Activated CD8-positive, alpha-beta T cell treated with anti-CD3 and anti-CD28 coated beads, Interleukin-2, amount 10 ng/mL, durations not matched to agents 7 days and 5 days (primary cell): ENCODE measurements at regions of chr7 and their contacts with region 1.

Region 1: DNA sequence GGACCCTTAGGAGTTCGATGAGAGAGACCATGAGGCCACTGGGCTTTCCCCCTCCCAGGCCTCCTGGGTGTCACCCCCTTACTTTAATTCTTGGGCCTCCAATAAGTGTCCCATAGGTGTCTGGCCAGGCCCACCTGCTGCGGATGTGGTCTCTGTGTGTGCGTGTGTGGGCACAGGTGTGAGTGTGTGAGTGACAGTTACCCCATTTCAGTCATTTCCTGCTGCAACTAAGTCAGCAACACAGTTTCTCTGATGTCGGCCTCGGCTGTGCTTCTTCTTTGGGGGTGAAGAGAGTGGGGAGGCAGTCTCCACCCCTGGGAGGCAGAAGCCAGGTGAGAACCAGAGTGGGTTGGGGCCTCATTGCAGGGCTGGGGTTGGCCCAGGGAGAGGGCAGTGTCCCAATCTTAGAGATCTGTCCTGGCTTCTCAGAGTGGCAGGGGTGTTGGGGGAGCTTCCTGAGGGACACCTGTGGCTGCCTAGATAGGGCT is 1.5 kb downstream of the PVRIG start:
- DNase-seq: peak; percentile 83
- ATAC-seq: peak; percentile 50
- H3K4me3 Mint-ChIP-seq: peak overlapping the region; percentile 95
- H3K27ac Mint-ChIP-seq: peak overlapping the region; percentile 98
- H3K4me1 Mint-ChIP-seq: peaks cover 65% of the 10 kb centered on the region
- H3K27me3 Mint-ChIP-seq: no peaks in the 10 kb centered on the region

Region 2: GRCh38 chr7:100148559-100149350 is 72.5 kb before region 1 on chr7 and contains the start of gene LAMTOR4:
- CTCF ChIA-PET with region 1: interaction called, 22 read pairs
- POLR2A ChIA-PET with region 1: interaction called, 15 read pairs
- DNase-seq: peak; percentile 100
- ATAC-seq: peak; percentile 99
- H3K4me3 Mint-ChIP-seq: peak within 1 kb of the TSS; percentile 96
- H3K27ac Mint-ChIP-seq: peak within 1 kb of the TSS; percentile 97
- H3K4me1 Mint-ChIP-seq: peaks cover 42% of the 10 kb centered on the region
- H3K27me3 Mint-ChIP-seq: no peaks in the 10 kb centered on the region
- total RNA-seq, gene LAMTOR4: 134 to 143 TPM

Region 3: DNA sequence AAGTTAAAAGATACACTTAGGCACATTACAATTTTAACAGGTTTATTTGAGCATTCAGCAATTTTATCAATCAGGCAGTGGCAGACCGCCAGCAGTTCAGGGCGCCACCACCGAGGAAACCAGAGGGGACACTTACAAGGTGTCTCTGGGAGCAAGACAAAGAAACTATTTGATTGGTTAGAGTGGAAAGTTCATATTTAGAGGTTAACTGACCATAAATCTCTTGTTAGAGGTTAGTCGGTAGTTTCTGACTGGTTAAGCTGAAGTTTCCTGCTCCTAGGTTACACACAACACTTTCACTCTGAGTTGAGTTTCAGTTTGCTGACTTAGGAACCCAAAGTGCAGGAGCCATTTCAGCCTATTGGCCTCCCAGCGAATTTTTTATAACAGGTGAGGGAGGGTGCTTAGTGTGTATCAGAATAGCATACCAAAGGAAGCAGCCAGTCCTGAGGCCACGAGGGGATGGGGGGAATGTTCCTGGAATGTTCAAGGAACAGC is 12.3 kb before region 1 on chr7:
- CTCF ChIA-PET with region 1: interaction called, 20 read pairs
- POLR2A ChIA-PET with region 1: interaction called, 48 read pairs
- DNase-seq: peak; percentile 78
- ATAC-seq: peak; percentile 88
- H3K4me3 Mint-ChIP-seq: peak overlapping the region; percentile 62
- H3K27ac Mint-ChIP-seq: peak overlapping the region; percentile 80
- H3K4me1 Mint-ChIP-seq: peaks cover 53% of the 10 kb centered on the region
- H3K27me3 Mint-ChIP-seq: no peaks in the 10 kb centered on the region